Activated naive CD4-positive, alpha-beta T cell treated with anti-CD3 and anti-CD28 coated beads for 36 hours (primary cell): ENCODE measurements at regions of chr1 and their contacts with region 1.

Region 1: DNA sequence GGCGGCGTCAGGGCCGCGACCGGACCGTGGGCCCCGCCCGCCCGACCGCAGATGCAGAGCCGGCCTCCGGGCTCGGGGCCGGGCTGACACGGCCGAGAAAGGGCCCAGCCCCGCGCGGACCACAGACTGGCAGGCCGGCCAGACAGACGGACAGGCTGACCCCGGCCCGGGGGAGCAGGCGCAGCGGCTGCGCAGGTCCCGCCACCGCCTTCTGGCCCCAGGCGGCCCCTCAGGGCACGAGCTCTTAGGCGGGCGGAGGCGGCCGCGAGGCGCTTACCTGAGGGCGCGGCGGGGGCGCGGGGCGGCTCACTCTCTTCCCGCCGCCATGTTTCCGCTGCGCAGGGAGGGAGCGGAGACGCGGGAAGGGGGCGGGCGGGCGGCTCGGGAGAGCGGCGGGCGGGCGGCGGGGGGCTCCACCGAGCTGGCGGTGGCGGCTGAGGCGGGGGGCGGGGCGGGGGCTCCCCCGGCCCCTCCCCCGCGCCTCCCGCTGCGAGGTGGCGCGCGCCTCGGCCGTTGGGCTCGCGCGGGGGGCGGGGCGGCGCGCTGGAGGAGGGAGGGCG is at the start of gene SCMH1:
- DNase-seq: peak; percentile 54
- H3K4me3 Mint-ChIP-seq: peak within 1 kb of the TSS; percentile 78
- H3K27ac Mint-ChIP-seq: peak within 1 kb of the TSS; percentile 74
- H3K4me1 Mint-ChIP-seq: peaks cover 18% of the 10 kb centered on the region
- H3K27me3 Mint-ChIP-seq: no peaks in the 10 kb centered on the region
- total RNA-seq, gene SCMH1: 17.8 to 20.7 TPM

Region 2: GRCh38 chr1:40979233-40980067 is 262.4 kb before region 1 on chr1 and contains the start of gene CTPS1:
- CTCF ChIA-PET with region 1: no interaction called
- intact Hi-C with region 1: loop called (anchors 2 kb)
- DNase-seq: peak; percentile 96
- H3K4me3 Mint-ChIP-seq: peak within 1 kb of the TSS; percentile 82
- H3K27ac Mint-ChIP-seq: peak within 1 kb of the TSS; percentile 84
- H3K4me1 Mint-ChIP-seq: peaks cover 40% of the 10 kb centered on the region
- H3K27me3 Mint-ChIP-seq: no peaks in the 10 kb centered on the region
- total RNA-seq, gene CTPS1: 74.9 to 75.1 TPM

Region 3: DNA sequence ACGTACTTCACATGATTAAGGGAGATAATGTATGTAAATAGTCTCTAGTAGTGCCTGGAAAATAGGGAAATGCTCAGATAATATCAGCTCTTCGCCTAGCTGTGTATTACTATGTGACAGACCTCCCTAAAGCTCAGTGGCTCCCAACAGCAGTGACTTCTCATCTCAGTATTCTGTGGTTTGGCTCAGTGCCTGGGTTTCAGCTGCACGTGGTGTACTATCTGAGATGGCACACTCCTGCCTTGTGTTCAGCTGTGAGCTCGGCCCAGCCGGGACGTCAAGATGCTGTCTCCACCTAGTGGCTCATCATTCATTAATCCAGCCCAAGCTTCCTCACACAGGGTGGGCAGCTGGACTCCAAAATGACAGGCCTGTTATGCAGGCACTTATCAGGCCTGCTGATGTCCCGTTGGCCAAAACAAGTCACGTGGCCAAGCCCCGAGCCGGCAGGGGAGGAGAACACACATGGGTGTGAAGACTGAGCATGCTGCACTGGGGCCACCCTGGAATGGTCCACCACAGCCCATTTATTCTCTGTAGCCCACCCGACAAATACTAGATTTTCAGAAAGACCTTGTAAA is 238.1 kb before region 1 on chr1:
- CTCF ChIA-PET with region 1: no interaction called
- intact Hi-C with region 1: loop called (anchors 1 kb)
- DNase-seq: peak; percentile 98
- H3K4me3 Mint-ChIP-seq: no peak overlapping the region
- H3K27ac Mint-ChIP-seq: no peak overlapping the region
- H3K4me1 Mint-ChIP-seq: peaks cover 38% of the 10 kb centered on the region
- H3K27me3 Mint-ChIP-seq: no peaks in the 10 kb centered on the region

Region 4: GRCh38 chr1:41222496-41222895 is 19.4 kb before region 1 on chr1:
- CTCF ChIA-PET with region 1: no interaction called
- intact Hi-C with region 1: loop called (anchors 2 kb)
- DNase-seq: no peak
- H3K4me3 Mint-ChIP-seq: no peak overlapping the region
- H3K27ac Mint-ChIP-seq: no peak overlapping the region
- H3K4me1 Mint-ChIP-seq: peaks cover 7% of the 10 kb centered on the region
- H3K27me3 Mint-ChIP-seq: no peaks in the 10 kb centered on the region